ENCODE measurements at regions of chr5 and their contacts with region 1.

Region 1: DNA sequence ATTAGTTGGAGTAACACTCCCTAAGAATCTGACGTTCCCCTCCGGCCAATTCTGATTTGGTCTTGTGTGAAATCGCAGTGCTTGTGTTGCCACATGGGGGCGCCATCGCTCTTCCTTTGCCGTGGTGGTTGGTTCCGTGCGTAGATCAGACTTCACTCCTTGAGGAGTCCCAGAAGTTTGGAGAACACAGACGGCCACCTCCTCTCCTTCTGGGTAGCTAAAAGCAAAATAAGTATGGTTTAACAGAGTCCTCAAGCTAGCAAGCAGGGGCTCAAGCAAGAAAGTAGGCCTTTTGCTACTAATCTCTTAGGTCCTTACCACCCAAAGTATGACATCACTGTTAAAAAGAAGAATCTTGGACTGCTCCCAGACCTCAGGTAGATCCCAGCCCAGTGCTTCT is 59.5 kb downstream of the HSPA4 start:
- DNase-seq: peak; percentile 89
- ATAC-seq: peak; percentile 91

Region 2: GRCh38 chr5:133247881-133248624 is 136.8 kb after region 1 on chr5:
- intact Hi-C with region 1: loop called (anchors 5 kb)
- DNase-seq: no peak
- ATAC-seq: peak; percentile 64

Region 3: GRCh38 chr5:133321833-133322420 is 210.6 kb after region 1 on chr5:
- intact Hi-C with region 1: loop called (anchors 10 kb)
- DNase-seq: no peak
- ATAC-seq: no peak

Measured in Right ventricle myocardium superior (tissue), 1 donor.